Activated naive CD4-positive, alpha-beta T cell treated with anti-CD3 and anti-CD28 coated beads for 36 hours (primary cell): ENCODE measurements at regions of chr18 and their contacts with region 1.

Region 1: DNA sequence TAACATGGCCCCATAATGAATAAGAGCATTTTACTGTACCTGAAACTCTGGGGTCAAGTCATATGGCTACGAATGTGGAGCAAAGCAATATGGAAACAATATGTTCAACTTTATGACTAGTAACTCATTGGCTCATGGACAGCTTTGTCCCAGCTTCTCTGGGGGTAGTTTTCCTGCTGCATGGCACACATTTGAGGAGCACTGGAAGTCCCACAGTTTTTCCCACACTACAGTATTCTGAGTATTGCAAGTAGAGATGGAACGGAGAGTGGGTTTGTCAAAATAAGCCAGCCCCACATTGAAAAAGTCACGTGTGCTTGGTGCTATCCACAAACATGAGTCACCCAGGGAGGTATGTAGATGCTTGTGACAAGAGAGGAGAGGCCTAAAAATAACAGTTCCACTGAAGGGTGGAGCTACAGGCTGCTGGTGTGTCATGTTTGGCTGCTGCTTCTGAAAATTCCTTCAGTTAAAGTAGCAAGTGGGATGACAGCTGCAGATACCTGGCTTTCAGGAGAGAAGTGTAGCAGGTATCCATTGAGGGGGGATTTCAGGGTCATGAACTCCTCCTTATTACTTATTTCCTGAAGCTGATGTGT is 48.2 kb upstream of the CTAGE1 start:
- DNase-seq: no peak
- H3K4me3 Mint-ChIP-seq: no peak overlapping the region
- H3K27ac Mint-ChIP-seq: no peak overlapping the region
- H3K4me1 Mint-ChIP-seq: no peaks in the 10 kb centered on the region
- H3K27me3 Mint-ChIP-seq: no peaks in the 10 kb centered on the region

Region 2: DNA sequence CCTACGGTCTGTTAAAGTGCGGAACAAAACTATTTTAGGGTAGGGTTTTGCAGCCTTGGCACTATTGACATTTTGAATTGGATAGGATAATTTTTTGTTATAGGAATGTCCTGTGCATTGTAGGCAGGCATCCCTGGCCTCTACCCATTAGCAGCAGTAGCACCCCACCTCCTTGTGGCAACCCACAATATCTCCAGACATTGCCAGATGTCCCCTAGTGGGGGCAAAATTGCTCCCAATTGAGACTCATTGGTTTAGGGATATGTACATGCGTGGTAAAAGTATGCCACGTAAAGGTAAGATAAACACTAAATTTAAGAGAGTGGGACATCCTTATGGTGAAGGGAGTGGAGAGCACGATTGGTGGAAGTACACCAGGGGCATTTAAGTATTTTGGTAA is 720.7 kb before region 1 on chr18:
- CTCF ChIA-PET with region 1: no interaction called
- intact Hi-C with region 1: no loop called
- DNase-seq: no peak
- H3K4me3 Mint-ChIP-seq: no peak overlapping the region
- H3K27ac Mint-ChIP-seq: no peak overlapping the region
- H3K4me1 Mint-ChIP-seq: peaks cover 49% of the 10 kb centered on the region
- H3K27me3 Mint-ChIP-seq: no peaks in the 10 kb centered on the region

Region 3: GRCh38 chr18:21897811-21898210 is 568.1 kb before region 1 on chr18:
- CTCF ChIA-PET with region 1: no interaction called
- intact Hi-C with region 1: no loop called
- DNase-seq: peak; percentile 46
- H3K4me3 Mint-ChIP-seq: no peak overlapping the region
- H3K27ac Mint-ChIP-seq: no peak overlapping the region
- H3K4me1 Mint-ChIP-seq: peaks cover 5% of the 10 kb centered on the region
- H3K27me3 Mint-ChIP-seq: peaks cover 11% of the 10 kb centered on the region

Region 4: DNA sequence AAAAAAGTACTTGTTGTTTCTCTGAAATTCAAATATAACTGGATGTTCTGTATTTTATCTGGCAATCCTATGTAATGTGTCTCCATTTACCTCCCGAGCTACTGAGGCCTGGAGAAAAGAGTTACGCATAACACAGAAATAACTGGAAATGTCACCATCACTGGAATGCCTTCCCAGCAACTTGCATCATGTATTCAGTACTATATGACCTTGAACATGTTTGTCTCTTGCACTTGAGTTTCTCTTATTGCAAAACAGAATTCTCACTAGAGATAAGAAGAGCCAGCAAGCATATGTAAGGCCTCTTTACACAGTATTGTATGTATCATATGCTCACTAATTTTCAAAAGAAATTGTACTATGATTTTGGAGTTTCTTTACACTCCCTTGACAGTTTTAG is 51.4 kb after region 1 on chr18:
- CTCF ChIA-PET with region 1: no interaction called
- intact Hi-C with region 1: loop called (anchors 10 kb)
- DNase-seq: no peak
- H3K4me3 Mint-ChIP-seq: no peak overlapping the region
- H3K27ac Mint-ChIP-seq: no peak overlapping the region
- H3K4me1 Mint-ChIP-seq: no peaks in the 10 kb centered on the region
- H3K27me3 Mint-ChIP-seq: no peaks in the 10 kb centered on the region